Activated naive CD4-positive, alpha-beta T cell treated with anti-CD3 and anti-CD28 coated beads for 36 hours (primary cell): ENCODE measurements at regions of chr9 and their contacts with region 1.

Region 1: GRCh38 chr9:5899292-5899691 is 8.6 kb downstream of the MLANA start:
- DNase-seq: no peak
- H3K4me3 Mint-ChIP-seq: no peak overlapping the region
- H3K27ac Mint-ChIP-seq: peak overlapping the region; percentile 59
- H3K4me1 Mint-ChIP-seq: peaks cover 37% of the 10 kb centered on the region
- H3K27me3 Mint-ChIP-seq: no peaks in the 10 kb centered on the region

Region 2: DNA sequence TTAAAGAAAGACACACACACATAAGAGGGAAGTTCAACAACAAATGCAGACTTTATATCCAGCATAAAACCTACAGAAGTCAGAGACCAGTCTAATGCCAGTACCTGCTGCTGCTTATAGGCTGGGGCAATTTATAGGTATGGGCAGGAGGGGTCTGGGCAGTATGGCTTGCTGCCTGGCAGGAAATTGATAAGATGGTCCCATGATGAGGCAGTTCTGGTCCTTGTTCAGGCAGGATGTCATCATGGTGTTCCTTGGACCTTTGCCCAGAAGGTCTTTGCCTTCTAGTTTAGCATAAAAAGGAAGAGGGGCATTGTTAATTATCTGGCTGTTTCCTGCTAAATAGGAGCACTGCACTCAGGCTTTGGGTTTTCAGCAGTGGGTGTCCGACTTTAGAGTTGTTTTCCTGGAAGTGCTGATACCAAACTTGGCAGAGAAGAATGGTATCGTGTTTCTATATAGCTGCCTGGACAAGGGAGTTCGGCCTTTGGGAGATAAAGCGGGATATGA is 399.3 kb before region 1 on chr9:
- CTCF ChIA-PET with region 1: no interaction called
- intact Hi-C with region 1: no loop called
- DNase-seq: no peak
- H3K4me3 Mint-ChIP-seq: no peak overlapping the region
- H3K27ac Mint-ChIP-seq: no peak overlapping the region
- H3K4me1 Mint-ChIP-seq: peaks cover 5% of the 10 kb centered on the region
- H3K27me3 Mint-ChIP-seq: peaks cover 2% of the 10 kb centered on the region

Region 3: GRCh38 chr9:5644501-5644900 is 254.8 kb before region 1 on chr9:
- CTCF ChIA-PET with region 1: no interaction called
- intact Hi-C with region 1: no loop called
- DNase-seq: no peak
- H3K4me3 Mint-ChIP-seq: no peak overlapping the region
- H3K27ac Mint-ChIP-seq: no peak overlapping the region
- H3K4me1 Mint-ChIP-seq: peaks cover 43% of the 10 kb centered on the region
- H3K27me3 Mint-ChIP-seq: no peaks in the 10 kb centered on the region

Region 4: GRCh38 chr9:5671711-5672353 is 227.5 kb before region 1 on chr9:
- CTCF ChIA-PET with region 1: no interaction called
- intact Hi-C with region 1: no loop called
- DNase-seq: peak; percentile 14
- H3K4me3 Mint-ChIP-seq: no peak overlapping the region
- H3K27ac Mint-ChIP-seq: no peak overlapping the region
- H3K4me1 Mint-ChIP-seq: peaks cover 35% of the 10 kb centered on the region
- H3K27me3 Mint-ChIP-seq: no peaks in the 10 kb centered on the region

Region 5: DNA sequence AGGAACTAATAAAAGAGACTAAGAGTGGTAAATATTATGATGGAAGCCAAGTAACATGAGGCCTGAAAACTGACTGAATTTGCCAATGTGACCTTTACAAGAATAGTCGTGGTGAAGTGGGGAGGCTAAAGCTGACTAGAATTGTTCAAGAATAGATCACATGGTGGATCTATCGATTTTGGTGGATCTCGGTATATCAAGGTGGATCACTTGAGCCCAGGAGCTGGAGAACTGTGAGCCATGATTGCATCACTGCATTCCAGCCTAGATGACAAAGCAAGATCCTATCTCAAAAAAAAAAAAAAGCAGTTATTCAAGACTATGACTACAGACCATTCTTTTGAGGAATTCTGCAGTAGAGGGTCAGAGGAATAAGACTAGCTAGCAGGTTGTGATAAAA is 81.4 kb before region 1 on chr9:
- CTCF ChIA-PET with region 1: no interaction called
- intact Hi-C with region 1: no loop called
- DNase-seq: no peak
- H3K4me3 Mint-ChIP-seq: no peak overlapping the region
- H3K27ac Mint-ChIP-seq: no peak overlapping the region
- H3K4me1 Mint-ChIP-seq: no peaks in the 10 kb centered on the region
- H3K27me3 Mint-ChIP-seq: no peaks in the 10 kb centered on the region

Region 6: DNA sequence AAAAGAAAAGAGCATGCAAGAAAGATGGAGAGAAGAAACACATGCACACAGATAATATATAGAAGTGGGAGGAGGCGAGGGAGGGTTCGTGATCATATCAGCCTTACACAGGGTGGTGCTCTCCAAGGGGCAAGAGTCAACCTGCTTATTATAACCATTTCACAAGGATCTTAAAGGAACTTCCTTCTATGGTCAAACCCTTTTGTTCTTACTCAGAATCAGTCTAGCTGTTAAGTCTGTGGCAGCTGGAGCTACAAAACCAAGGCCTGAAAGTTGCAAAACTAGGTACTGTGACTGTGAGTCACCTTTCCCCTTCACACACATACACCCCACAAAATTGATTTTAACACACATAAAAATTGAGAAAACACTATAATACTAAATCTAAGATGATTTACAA is 47.8 kb before region 1 on chr9:
- CTCF ChIA-PET with region 1: no interaction called
- intact Hi-C with region 1: loop called (anchors 5 kb)
- DNase-seq: peak; percentile 73
- H3K4me3 Mint-ChIP-seq: no peak overlapping the region
- H3K27ac Mint-ChIP-seq: peak overlapping the region; percentile 26
- H3K4me1 Mint-ChIP-seq: peaks cover 41% of the 10 kb centered on the region
- H3K27me3 Mint-ChIP-seq: no peaks in the 10 kb centered on the region